ENCODE measurements at regions of chr14 and their contacts with region 1.

Region 1: DNA sequence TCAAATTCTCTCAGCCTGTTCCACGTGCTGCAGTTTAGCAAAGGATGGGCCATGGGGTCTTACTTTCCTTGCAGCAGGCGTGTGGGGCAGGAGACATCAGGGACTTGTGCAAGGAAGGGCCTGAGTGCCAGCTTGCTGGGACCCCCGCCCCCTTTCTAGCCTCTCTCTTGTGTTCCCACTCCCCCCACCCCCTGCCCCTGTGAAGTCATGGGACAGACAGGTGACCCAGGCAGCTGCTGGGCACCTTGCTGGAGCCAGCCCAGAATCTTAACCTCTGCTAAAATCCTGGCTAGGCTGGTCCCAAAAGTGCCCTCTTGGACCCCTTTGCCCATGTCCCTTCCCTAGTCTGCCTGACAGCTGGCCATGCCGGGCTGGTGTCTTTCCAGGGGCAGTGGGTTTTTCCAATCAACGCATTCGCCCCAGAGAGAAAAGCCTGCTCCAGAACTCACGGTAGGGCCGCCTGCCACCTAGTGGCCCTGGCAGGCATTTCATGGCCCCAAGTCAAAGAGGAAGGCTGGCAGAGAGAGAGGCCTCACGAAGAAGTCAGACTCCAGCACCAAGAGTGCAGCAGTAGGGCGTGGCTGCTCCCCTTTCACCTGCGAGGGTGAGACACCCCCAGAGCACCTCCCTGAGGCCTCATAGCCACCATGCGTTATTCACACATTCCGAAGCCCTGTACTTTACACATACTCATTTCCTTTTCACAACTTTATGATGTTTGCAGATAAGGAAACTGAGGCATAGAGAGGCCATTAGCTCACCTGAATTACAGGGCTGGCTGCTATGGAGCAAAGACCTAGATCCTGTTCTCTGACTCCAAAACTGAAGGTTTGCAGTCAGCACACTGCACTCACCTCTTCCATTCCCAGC is 67.4 kb downstream of the LGMN start:
- DNase-seq: peak; percentile 62 to 76
- ATAC-seq: peak; percentile 45 to 83; a peak in 4 of 6 replicates
- H3K4me3 ChIP-seq: no peak overlapping the region
- H3K27ac ChIP-seq: peak overlapping the region in 1 of 2 experiments; percentile 58; a peak in 2 of 6 replicates
- H3K4me1 ChIP-seq: no peaks in the 10 kb centered on the region
- CTCF ChIP-seq: peak; percentile 68
- EP300 ChIP-seq: no peak
- POLR2A ChIP-seq: no peak
- RAD21 ChIP-seq: peak; percentile 78 to 87

Region 2: DNA sequence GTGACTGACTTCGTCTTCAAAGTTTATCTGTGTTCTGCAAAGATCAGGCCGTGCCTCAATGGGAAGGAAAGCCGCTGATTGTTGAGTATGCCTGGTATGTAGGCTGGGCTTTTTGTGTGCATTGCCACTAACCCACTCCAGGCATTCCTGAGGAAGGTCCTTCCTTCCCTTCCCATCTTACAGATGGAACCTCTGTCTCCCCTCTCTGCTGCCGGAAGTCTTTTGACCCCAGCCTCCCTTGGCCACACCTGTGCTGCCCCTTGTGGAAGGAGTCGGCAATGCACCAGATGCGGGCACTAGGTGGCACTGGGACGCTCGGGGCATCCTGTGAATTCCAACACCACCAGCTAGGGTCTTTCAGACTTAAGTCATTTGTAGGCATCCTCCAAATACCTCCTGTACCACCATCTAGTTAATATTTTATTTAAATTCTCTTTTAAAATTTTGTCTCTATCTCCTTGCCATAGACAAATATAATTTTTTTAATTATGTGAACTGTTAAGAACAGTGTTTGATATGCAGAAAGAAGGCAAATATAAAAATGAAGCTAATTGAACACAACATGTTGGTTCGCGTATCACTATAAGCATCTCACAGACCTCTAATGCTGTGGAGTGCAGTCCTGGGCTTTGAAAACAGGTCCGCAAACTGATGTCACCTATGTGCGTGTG is 67.9 kb before region 1 on chr14:
- CTCF ChIA-PET with region 1: interaction called, 10 read pairs
- POLR2A ChIA-PET with region 1: no interaction called
- DNase-seq: peak in 1 of 2 experiments; percentile 47
- ATAC-seq: peak; percentile 64 to 87; a peak in 5 of 6 replicates
- H3K4me3 ChIP-seq: no peak overlapping the region
- H3K27ac ChIP-seq: peak overlapping the region in 1 of 2 experiments; percentile 18; a peak in 1 of 6 replicates
- H3K4me1 ChIP-seq: peaks cover 21% of the 10 kb centered on the region
- CTCF ChIP-seq: peak; percentile 67
- EP300 ChIP-seq: no peak
- POLR2A ChIP-seq: no peak
- RAD21 ChIP-seq: peak; percentile 59 to 69

Region 3: DNA sequence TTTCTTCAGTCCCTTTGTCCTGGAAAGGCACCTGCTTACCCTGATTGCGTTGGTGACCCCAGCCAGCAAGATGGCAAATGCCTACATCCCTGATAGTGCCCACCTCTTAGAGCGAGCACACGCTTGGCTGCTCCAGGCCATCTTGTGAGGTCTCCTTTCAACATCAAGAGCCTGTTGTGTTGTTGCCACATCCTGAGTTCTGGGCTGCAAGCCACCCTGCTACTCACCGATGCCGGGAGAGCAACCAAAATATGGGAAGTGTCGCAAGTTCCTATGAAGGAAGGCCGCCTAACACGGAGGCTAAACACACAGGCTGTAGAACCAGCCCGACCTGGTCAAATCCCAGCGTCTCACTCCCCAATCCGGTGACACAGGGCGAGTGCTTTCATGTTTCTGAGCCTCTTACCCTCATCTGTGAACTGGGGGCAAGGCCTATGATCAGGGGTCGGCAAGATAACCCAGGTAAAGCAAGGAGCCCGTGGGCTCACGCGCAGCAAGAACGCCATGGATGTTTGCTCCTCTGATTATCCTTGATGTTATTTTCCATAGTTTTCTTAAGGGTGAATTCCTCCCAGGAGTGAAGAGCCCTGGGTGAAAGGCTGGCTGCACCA is 31.0 kb before region 1 on chr14:
- CTCF ChIA-PET with region 1: no interaction called
- POLR2A ChIA-PET with region 1: no interaction called
- DNase-seq: no peak
- ATAC-seq: no peak
- H3K4me3 ChIP-seq: no peak overlapping the region
- H3K27ac ChIP-seq: no peak overlapping the region
- H3K4me1 ChIP-seq: no peaks in the 10 kb centered on the region; the same call in 2 of the 3 replicates
- CTCF ChIP-seq: no peak
- EP300 ChIP-seq: no peak
- POLR2A ChIP-seq: no peak
- RAD21 ChIP-seq: no peak

Measured in A549 (cell line).